ENCODE measurements at regions of chr10 and their contacts with region 1.

Region 1: DNA sequence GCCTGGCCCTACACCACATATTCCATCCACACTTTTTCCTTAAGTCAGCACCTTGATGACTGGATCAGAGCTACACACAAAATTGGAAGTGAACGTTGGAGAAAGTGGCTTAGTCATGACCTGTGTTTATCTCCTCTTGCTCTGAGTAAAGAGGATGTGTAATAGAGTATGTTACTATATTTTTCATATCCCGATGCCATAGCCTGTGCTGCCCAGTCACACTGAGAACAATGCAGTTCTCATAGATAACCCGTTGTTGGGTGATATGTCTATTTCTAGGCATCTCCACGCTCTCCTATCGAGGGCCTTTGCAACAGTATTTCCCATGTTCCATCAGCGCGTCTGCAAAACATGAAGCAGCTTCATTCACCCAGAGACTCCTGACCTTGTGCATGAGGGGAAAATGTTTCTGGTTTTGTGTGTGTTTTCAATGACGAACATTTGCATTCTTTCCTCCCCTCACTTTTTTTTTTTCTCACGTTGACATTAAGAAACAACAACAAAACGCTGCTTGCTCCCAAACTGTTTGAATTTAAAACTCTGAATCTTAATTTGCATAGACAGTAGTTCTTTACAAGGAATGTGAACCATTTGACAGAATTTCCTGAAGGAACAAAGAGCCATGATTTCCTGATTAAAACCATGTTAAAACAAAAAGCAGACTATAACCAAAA is 43.4 kb downstream of the GRK5 start:
- DNase-seq: peak; percentile 72
- H3K4me3 ChIP-seq: no peak overlapping the region
- H3K27ac ChIP-seq: peak overlapping the region; percentile 78
- H3K27me3 ChIP-seq: no peaks in the 10 kb centered on the region
- CTCF ChIP-seq: no peak

Region 2: GRCh38 chr10:119233821-119234220 is 17.0 kb before region 1 on chr10:
- CTCF ChIA-PET with region 1: no interaction called
- POLR2A ChIA-PET with region 1: interaction called, 11 read pairs
- DNase-seq: no peak
- H3K4me3 ChIP-seq: no peak overlapping the region
- H3K27ac ChIP-seq: peak overlapping the region; percentile 80
- H3K27me3 ChIP-seq: no peaks in the 10 kb centered on the region
- CTCF ChIP-seq: no peak

Region 3: GRCh38 chr10:119270762-119271366 is 20.1 kb after region 1 on chr10:
- CTCF ChIA-PET with region 1: interaction called, 4 read pairs
- POLR2A ChIA-PET with region 1: interaction called, 11 read pairs
- DNase-seq: no peak
- H3K4me3 ChIP-seq: no peak overlapping the region
- H3K27ac ChIP-seq: peak overlapping the region; percentile 57
- H3K27me3 ChIP-seq: no peaks in the 10 kb centered on the region
- CTCF ChIP-seq: no peak

Region 4: GRCh38 chr10:119414081-119414611 is 163.4 kb after region 1 on chr10:
- CTCF ChIA-PET with region 1: no interaction called
- POLR2A ChIA-PET with region 1: interaction called, 12 read pairs
- DNase-seq: peak; percentile 96
- H3K4me3 ChIP-seq: no peak overlapping the region
- H3K27ac ChIP-seq: peak overlapping the region; percentile 94
- H3K27me3 ChIP-seq: no peaks in the 10 kb centered on the region
- CTCF ChIP-seq: no peak